RWPE1 (cell line): ENCODE measurements at regions of chr7 and their contacts with region 1.

Region 1: DNA sequence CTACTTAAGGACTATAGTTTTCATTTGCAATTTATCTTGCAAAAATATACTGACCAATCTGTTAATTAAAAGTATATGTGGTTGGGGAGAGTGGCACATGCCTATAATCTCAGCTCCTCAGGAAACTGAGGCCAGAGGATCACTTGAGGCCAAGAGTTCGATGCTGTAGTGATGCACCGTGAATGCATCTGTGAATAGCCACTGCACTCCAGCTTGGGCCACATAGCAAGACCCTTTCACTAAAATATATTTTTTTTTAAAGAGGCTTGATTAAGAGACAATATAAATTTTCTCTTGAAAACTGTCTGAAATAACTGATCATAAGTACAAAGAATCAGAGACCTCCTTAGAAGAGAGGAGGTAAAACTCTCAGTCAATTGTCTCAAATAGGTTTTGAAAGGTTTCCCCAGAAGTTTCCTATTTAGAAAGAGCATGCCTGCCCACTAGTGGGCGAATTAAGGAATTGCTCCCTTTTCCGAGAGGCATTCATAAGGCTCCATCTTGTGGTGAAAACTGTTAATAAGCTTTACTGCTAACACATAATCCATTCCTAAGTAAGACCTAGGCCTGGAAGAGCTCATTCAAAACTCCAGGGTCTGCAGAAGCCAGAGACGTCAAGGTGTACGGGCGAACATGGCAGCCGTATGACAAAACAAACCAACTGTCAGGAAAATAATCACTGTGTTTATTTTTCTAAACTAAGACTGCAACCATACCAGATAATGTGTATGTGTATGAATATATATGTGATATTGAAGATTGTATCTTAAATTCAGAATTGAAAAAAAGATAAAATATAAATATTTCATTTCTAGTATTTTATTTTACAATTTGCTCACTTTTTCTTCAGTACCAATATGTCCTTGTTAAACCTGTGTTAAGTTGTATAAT is 6.8 kb upstream of the TAS2R40 start:
- DNase-seq: peak; percentile 78
- H3K27ac ChIP-seq: no peak overlapping the region
- CTCF ChIP-seq: peak; percentile 100

Region 2: GRCh38 chr7:143008007-143008901 is 206.8 kb before region 1 on chr7:
- CTCF ChIA-PET with region 1: interaction called, 21 read pairs
- POLR2A ChIA-PET with region 1: no interaction called
- DNase-seq: peak; percentile 59
- H3K27ac ChIP-seq: no peak overlapping the region
- CTCF ChIP-seq: peak; percentile 99